ENCODE measurements at regions of chr3 and their contacts with region 1.

Region 1: GRCh38 chr3:133578548-133579191 is 5.2 kb downstream of the CDV3 start:
- DNase-seq: no peak
- ATAC-seq: peak; percentile 64
- H3K4me3 Mint-ChIP-seq: no peak overlapping the region
- H3K27ac Mint-ChIP-seq: peak overlapping the region; percentile 82; the same call in 1 of the 2 replicates
- H3K4me1 Mint-ChIP-seq: peaks cover 31% of the 10 kb centered on the region
- H3K27me3 Mint-ChIP-seq: no peaks in the 10 kb centered on the region
- CTCF ChIP-seq: no peak

Region 2: DNA sequence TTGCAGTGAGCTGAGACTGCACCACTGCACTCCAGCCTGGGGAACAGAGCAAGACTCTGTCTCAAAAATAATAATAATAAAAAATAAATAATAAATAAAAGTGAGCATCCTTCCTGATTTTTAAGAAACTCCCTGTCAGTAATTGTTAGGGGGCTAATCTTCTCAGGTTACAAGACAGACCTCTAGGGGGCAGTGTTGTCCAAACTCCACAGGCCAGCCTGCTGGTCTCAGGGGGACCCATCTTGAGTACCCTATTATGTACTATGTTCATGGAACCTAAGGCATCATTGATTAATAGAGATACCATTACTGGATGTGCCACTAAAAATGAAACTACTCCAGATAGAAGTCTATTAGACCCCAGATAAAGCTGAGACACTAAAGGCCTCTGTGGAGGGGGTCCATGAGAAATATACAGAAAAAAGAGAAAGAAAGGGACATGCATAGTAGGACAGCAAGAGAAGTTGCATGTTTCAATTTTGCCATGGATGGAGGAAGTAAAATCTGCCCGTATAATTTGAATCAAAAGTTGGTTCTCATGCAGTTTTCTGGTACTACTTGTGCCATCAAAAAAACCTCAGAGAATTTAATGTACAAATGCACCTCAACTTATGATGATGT is 90.6 kb before region 1 on chr3:
- CTCF ChIA-PET with region 1: interaction called, 14 read pairs
- POLR2A ChIA-PET with region 1: interaction called, 5 read pairs
- DNase-seq: peak; percentile 34
- ATAC-seq: no peak; the same call in 1 of the 2 replicates
- H3K4me3 Mint-ChIP-seq: no peak overlapping the region
- H3K27ac Mint-ChIP-seq: no peak overlapping the region
- H3K4me1 Mint-ChIP-seq: peaks cover 38% of the 10 kb centered on the region
- H3K27me3 Mint-ChIP-seq: peaks cover 4% of the 10 kb centered on the region; the same call in 1 of the 2 replicates
- CTCF ChIP-seq: peak; percentile 66